ENCODE measurements at regions of chr7 and their contacts with region 1.

Region 1: GRCh38 chr7:50793115-50793946 is 10.6 kb upstream of the GRB10 start:
- DNase-seq: peak in 8 of 9 donors; percentile 17 to 43 (median 34)
- ATAC-seq: peak; percentile 68
- H3K4me3 ChIP-seq: no peak overlapping the region
- H3K4me3 Mint-ChIP-seq: peak overlapping the region; percentile 52 to 89 (median 77)
- H3K27ac ChIP-seq: no peak overlapping the region
- H3K27ac Mint-ChIP-seq: peak overlapping the region in 4 of 9 donors; percentile 6 to 87 (median 48)
- H3K4me1 ChIP-seq: peaks cover 0 to 3% of the 10 kb centered on the region in 2 donors
- H3K4me1 Mint-ChIP-seq: peaks cover 0 to 37% (median 16%) of the 10 kb centered on the region in 7 donors
- H3K27me3 ChIP-seq: peaks cover 0 to 4% of the 10 kb centered on the region in 2 donors
- H3K27me3 Mint-ChIP-seq: peaks cover 23 to 80% (median 34%) of the 10 kb centered on the region in 5 donors

Region 2: GRCh38 chr7:49721441-49721840 is 1071.9 kb before region 1 on chr7:
- CTCF ChIA-PET with region 1: no interaction called
- POLR2A ChIA-PET with region 1: no interaction called
- intact Hi-C with region 1: no loop called
- DNase-seq: no peak
- ATAC-seq: no peak
- H3K4me3 ChIP-seq: no peak overlapping the region
- H3K4me3 Mint-ChIP-seq: no peak overlapping the region
- H3K27ac ChIP-seq: no peak overlapping the region
- H3K27ac Mint-ChIP-seq: no peak overlapping the region
- H3K4me1 ChIP-seq: no peaks in the 10 kb centered on the region
- H3K4me1 Mint-ChIP-seq: no peaks in the 10 kb centered on the region
- H3K27me3 ChIP-seq: no peaks in the 10 kb centered on the region
- H3K27me3 Mint-ChIP-seq: peaks cover 0 to 4% (median 0%) of the 10 kb centered on the region in 5 donors

Region 3: GRCh38 chr7:50449881-50450589 is 343.3 kb before region 1 on chr7 and contains the start of gene FIGNL1:
- CTCF ChIA-PET with region 1: no interaction called
- POLR2A ChIA-PET with region 1: no interaction called
- intact Hi-C with region 1: loop called in 1 of 2 experiments (anchors 5 kb)
- DNase-seq: peak; percentile 61 to 87 (median 84)
- ATAC-seq: peak; percentile 98
- H3K4me3 ChIP-seq: peak within 1 kb of the TSS; percentile 63
- H3K4me3 Mint-ChIP-seq: peak within 1 kb of the TSS; percentile 91 to 96 (median 94)
- H3K27ac ChIP-seq: peak within 1 kb of the TSS; percentile 94
- H3K27ac Mint-ChIP-seq: peak within 1 kb of the TSS; percentile 92 to 99 (median 96)
- H3K4me1 ChIP-seq: peaks cover 13 to 14% of the 10 kb centered on the region in 2 donors
- H3K4me1 Mint-ChIP-seq: peaks cover 14 to 43% (median 29%) of the 10 kb centered on the region in 7 donors
- H3K27me3 ChIP-seq: no peaks in the 10 kb centered on the region
- H3K27me3 Mint-ChIP-seq: peaks cover 0 to 11% (median 0%) of the 10 kb centered on the region in 5 donors
- total RNA-seq, gene FIGNL1: 7.7 to 30.2 (median 14.3) TPM

Region 4: DNA sequence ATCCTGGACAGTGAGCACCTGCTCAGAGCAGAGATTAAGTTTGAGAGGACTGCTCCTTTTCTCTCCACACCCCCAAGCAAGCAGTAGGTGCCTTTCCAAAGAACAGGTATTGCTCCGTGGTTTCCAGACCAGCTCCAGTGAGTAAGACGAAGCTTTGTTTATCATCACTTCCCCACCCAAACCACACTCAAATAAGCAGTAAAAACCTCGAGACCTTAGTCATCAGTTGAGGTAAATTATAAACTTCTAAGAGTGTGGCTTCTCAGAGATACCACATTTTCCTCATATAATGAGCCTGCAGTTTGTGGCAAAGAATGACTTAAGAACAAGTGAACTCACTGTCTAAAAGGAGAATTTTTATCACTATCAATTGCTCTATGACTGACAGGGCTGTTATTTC is 39.4 kb after region 1 on chr7:
- CTCF ChIA-PET with region 1: no interaction called
- POLR2A ChIA-PET with region 1: no interaction called
- intact Hi-C with region 1: loop called in 1 of 2 experiments (anchors 5 kb)
- DNase-seq: peak in 1 of 9 donors; percentile 31
- ATAC-seq: no peak
- H3K4me3 ChIP-seq: no peak overlapping the region
- H3K4me3 Mint-ChIP-seq: peak overlapping the region in 1 of 10 donors; percentile 41
- H3K27ac ChIP-seq: no peak overlapping the region
- H3K27ac Mint-ChIP-seq: peak overlapping the region in 1 of 9 donors; percentile 70
- H3K4me1 ChIP-seq: no peaks in the 10 kb centered on the region
- H3K4me1 Mint-ChIP-seq: peaks cover 0 to 32% (median 0%) of the 10 kb centered on the region in 7 donors
- H3K27me3 ChIP-seq: no peaks in the 10 kb centered on the region
- H3K27me3 Mint-ChIP-seq: peaks cover 4 to 35% (median 9%) of the 10 kb centered on the region in 5 donors

Measured in naive thymus-derived CD4-positive, alpha-beta T cell (primary cell).